Cardiac septum (tissue), 1 donor: ENCODE measurements at regions of chr3 and their contacts with region 1.

Region 1: DNA sequence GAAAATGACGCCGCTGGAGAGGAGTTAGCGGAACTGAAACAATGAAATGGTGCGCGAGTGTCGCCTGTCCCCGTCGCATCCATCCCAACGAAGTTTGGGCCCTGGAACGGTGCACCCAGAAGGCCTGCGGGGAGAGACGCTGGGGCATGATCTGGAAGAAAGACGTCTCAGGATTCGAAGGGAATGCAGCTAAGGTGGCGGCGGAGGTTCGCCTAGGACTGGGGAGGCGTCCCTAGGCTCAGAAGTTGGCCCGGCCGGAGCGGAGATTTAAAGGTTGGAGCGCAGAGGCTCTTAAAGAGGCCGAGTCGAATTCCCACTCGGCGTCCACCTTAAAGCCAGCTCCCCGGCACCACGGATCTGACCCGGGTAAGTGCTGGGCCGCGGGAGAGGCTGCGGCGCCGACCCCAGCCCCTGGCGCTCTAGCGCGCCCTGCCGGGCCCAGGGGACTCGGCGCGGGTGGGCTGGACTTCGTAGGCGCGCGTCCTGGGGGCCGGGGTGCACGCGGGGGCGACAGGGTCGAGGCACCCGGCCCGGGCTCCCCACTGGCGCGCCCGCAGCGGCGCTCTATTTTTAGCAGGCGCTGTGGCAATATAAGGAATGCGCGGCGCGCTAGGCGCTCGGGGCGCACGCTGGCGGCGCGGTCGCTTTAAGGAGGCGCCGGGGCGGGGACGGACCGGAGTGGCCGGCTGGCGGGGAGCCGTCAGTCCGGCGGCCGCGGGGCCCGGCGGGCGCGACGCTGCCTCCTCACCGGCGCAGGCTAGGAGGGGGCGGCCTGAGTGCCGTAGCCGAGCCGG is at the start of gene MRAS:
- DNase-seq: peak; percentile 90
- total RNA-seq, gene MRAS: 327 TPM

Region 2: DNA sequence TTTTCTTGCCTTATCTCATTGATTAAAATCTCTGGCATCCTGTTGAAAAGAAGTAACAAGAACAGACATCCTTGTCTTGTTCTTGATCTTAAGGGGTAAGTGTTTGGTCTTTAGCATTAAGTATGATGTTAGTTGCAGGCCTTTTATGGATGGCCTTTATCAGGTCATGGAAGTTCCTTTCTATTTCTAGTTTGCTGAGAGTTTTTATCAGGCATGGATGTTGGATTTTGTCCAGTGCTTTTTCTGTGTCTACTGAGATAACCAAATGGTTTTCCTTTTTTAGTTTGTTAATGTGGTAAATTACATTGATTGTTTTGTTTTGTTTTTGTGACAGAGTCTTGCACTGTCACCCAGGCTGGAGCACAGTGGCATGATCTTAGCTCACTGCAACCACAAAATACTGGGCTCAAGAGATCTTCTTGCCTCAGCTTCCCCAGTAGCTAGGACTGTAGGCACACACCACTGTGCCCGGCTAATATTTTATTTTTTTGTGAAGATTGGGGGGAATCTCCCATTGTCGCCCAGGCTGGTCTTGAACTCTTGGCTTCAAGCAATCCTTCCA is 26.5 kb after region 1 on chr3:
- intact Hi-C with region 1: loop called (anchors 2 kb)
- DNase-seq: peak; percentile 63

Region 3: DNA sequence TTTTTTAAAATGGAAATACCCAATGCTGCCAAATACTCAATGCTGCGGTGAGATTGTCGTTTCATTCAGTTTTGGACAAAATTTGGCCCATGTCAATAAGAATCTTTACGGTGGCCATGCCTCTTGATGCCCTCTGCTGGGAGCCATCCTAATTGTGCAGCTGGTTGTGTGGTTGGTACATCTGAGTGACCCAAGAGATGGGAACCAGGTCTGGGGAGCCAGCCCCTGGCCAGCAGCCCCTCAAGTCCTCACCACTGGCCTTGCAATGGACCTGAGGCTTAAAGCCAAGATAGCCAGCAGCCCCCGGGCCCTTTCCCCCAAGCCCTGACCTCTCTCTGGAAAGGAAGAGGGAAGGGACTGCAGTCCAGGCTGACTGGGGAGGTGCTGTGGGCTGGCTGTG is 49.8 kb after region 1 on chr3:
- intact Hi-C with region 1: loop called (anchors 5 kb)
- DNase-seq: no peak